Activated CD4-positive, alpha-beta T cell treated with anti-CD3 and anti-CD28 coated beads, Interleukin-2, amount 10 ng/mL, durations not matched to agents 24 days and 14 days (primary cell): ENCODE measurements at regions of chr3 and their contacts with region 1.

Region 1: DNA sequence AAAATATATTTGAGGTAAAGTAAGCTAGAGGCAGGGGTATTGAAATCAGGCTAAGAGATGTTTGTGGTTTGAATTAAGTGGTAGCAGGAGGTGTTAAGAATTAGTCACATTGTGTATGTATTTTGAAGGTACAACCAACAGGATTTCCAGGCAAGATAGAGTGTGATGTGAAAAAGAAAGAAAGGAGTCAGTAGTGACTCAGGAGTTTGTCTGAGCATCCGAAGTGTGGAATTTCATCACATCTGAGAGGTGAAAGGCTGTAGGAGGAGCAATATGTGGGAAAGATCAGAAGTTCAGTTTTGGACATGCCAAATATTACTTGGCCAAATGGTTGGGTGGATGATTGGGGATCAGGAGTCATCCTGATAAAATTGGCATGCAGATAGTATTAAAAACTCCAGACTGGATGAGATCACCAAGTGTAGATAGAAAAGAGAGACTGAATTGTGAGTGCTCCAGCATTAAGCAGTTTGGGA is 32.1 kb upstream of the EBLN2 start:
- DNase-seq: no peak
- H3K4me3 Mint-ChIP-seq: peak overlapping the region; percentile 5
- H3K27ac Mint-ChIP-seq: peak overlapping the region; percentile 49
- H3K4me1 Mint-ChIP-seq: peaks cover 50% of the 10 kb centered on the region
- H3K27me3 Mint-ChIP-seq: no peaks in the 10 kb centered on the region

Region 2: GRCh38 chr3:72960812-72961518 is 68.4 kb before region 1 on chr3:
- intact Hi-C with region 1: loop called (anchors 1 kb)
- DNase-seq: no peak
- H3K4me3 Mint-ChIP-seq: no peak overlapping the region
- H3K27ac Mint-ChIP-seq: no peak overlapping the region
- H3K4me1 Mint-ChIP-seq: peaks cover 34% of the 10 kb centered on the region
- H3K27me3 Mint-ChIP-seq: peaks cover 2% of the 10 kb centered on the region

Region 3: DNA sequence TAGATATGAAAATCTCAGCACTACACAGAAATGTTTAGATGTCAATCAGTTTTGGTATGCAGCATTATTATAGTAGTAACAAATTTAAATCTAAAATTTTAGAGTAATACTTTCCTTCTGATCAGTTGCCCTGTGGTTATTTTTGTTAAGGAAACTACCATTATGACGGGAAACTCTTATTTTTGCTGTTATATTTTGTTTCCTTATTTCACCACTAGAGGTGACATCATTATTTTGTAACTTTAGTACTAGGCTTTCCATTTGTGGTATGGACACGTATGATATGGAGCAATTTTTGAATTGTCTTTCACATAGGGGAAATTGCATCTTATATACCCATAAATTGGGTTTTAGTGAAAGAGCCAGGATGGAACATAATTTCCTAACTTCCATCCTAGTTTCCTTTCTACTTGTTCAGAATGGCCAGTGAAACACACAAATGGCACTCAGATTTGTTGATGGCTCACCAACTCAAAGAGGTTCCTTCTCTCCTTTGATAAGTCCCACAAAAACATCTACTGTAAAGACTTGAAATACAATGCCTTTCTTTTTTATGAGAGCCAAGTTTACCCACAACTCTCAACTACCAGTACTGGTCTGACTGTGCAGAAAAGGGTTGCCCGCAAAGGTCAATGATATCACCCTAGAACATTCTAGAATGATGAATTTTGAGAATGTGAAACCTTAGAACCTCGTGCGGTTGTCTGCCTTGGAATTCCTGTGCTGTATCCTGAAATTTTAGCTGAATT is 52.1 kb before region 1 on chr3:
- intact Hi-C with region 1: loop called (anchors 2 kb)
- DNase-seq: no peak
- H3K4me3 Mint-ChIP-seq: no peak overlapping the region
- H3K27ac Mint-ChIP-seq: peak overlapping the region; percentile 85
- H3K4me1 Mint-ChIP-seq: peaks cover 8% of the 10 kb centered on the region
- H3K27me3 Mint-ChIP-seq: peaks cover 8% of the 10 kb centered on the region

Region 4: GRCh38 chr3:73045391-73045790 is 16.0 kb after region 1 on chr3:
- intact Hi-C with region 1: loop called (anchors 2 kb)
- DNase-seq: no peak
- H3K4me3 Mint-ChIP-seq: no peak overlapping the region
- H3K27ac Mint-ChIP-seq: no peak overlapping the region
- H3K4me1 Mint-ChIP-seq: peaks cover 28% of the 10 kb centered on the region
- H3K27me3 Mint-ChIP-seq: no peaks in the 10 kb centered on the region

Region 5: DNA sequence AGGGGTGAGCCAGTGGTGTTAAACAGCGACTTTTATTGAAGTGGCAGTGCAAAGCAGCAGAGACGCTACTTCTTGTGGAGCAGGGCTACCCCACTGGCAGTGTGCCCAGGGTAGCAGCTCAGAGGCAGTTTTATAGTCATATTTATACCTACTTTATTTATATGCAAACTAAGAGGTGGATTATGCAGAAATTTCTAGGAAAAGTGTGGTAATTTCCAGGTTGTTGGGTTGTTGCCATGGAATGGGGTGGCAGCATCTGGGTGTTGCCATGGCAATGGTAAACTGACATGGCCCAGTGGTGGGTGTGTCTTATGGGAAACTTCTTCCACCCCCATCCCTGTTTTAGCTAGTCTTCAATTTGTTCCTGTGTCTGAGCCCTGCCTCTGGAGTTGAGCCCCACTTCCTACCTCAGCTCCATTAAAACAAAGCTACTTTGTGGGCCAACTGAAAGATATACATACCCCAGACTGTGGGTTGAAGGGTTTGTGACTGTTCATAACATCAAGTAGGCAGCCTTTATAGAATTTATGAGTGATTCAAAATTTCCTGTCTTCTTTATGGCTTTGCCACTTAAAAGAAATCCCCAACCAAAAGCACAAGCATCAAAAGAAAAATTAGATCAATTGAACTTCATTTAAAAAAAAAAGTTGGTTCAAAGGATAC is 92.4 kb after region 1 on chr3:
- intact Hi-C with region 1: no loop called
- DNase-seq: no peak
- H3K4me3 Mint-ChIP-seq: no peak overlapping the region
- H3K27ac Mint-ChIP-seq: no peak overlapping the region
- H3K4me1 Mint-ChIP-seq: no peaks in the 10 kb centered on the region
- H3K27me3 Mint-ChIP-seq: peaks cover 4% of the 10 kb centered on the region